HEK293 (cell line): ENCODE measurements at regions of chr6 and their contacts with region 1.

Region 1: DNA sequence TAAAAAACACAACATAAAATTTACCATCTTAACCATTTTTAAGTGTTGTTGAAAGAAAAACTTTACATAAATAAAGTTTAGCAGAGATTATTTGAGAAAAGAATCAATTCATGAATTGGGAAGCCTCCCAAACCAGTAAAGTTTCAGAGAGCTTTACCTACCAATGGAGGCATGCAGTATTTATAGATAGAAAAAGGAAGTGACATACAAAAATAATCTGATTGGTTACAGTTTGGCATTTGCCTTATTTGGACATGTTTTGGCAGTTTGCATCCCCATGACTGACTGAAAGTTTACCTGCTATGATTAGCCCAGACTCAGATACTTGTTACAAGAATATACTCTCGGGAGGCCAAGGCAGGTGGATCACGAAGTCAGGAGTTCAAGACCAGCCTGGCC is 3.7 kb upstream of the CMTR1 start:
- H3K4me3 ChIP-seq: no peak overlapping the region
- H3K27ac ChIP-seq: no peak overlapping the region
- H3K4me1 ChIP-seq: peaks cover 4% of the 10 kb centered on the region; the same call in 1 of the 2 replicates
- CTCF ChIP-seq: no peak

Region 2: DNA sequence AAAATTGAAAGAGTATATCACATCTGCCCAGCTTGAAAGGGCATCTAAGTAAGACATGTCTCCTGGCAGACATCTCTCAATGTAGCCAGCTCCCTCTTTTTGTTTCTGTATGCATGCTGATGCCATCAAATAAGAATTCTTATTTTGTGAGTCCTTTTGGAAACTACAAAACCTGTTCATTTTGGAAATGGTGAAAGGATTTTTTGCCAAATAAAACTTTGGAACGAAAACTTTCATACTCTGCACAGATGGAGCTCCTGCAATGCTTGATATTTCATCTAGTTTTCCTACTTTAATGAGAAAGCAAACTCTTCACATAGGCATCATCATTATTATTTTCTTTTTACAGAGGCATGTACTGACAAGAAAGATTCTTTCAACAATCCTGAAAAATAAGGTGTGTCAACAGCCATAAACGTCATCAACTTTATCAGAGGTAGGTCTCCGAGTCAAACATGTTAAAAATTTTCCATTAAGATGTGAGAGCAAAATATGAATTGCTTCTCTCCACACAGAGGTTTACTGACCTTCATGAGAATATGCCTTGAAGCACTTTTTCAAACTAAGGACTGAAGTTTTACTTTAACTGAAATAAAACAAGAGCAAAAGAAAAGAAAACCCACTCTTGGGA is 22.5 kb before region 1 on chr6:
- CTCF ChIA-PET with region 1: no interaction called
- POLR2A ChIA-PET with region 1: no interaction called
- H3K4me3 ChIP-seq: no peak overlapping the region
- H3K27ac ChIP-seq: no peak overlapping the region
- H3K4me1 ChIP-seq: no peaks in the 10 kb centered on the region
- CTCF ChIP-seq: no peak

Region 3: GRCh38 chr6:38131527-38131965 is 702.2 kb after region 1 on chr6:
- CTCF ChIA-PET with region 1: interaction called, 10 read pairs
- POLR2A ChIA-PET with region 1: no interaction called
- H3K4me3 ChIP-seq: no peak overlapping the region
- H3K27ac ChIP-seq: no peak overlapping the region
- H3K4me1 ChIP-seq: no peaks in the 10 kb centered on the region
- CTCF ChIP-seq: no peak